Activated naive CD4-positive, alpha-beta T cell treated with anti-CD3 and anti-CD28 coated beads, Interleukin-2, amount 10 ng/mL, durations not matched to agents 7 days and 5 days (primary cell): ENCODE measurements at regions of chr18 and their contacts with region 1.

Region 1: GRCh38 chr18:74196220-74197119 is 48.1 kb downstream of the TIMM21 start:
- DNase-seq: peak; percentile 63
- H3K4me3 Mint-ChIP-seq: peak overlapping the region; percentile 48
- H3K27ac Mint-ChIP-seq: no peak overlapping the region
- H3K4me1 Mint-ChIP-seq: peaks cover 2% of the 10 kb centered on the region
- H3K27me3 Mint-ChIP-seq: peaks cover 25% of the 10 kb centered on the region

Region 2: DNA sequence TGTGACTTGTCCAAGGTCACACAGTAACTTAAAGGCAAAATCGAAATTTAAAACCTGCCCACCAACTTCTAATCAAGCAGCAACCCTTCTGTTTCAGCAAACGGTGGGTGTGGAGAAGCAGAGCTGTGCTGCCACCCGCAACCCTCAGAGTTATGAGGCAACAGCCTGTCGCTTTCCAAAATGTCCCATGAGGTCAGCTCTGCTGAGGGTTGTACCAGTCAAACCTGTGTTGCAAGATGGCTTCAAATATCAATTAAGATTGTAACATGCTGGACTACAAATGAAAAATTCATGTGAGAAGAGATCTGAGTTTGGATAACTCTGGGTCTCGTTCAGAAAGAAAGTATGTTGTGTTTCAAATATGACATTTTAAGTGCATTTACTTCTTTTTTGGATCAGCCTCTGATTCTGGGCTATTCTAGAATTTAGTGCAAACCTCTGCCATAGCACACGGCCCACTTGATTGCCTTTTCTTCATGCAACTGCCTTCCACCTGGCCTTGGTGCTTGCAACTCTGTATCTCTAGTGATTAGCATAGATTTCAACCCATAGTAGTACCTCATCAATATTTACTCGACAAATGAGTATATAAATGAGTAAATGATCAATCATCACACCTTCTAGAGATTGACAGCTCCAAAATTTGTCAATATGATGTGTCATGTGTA is 21.1 kb after region 1 on chr18:
- CTCF ChIA-PET with region 1: no interaction called
- DNase-seq: no peak
- H3K4me3 Mint-ChIP-seq: no peak overlapping the region
- H3K27ac Mint-ChIP-seq: no peak overlapping the region
- H3K4me1 Mint-ChIP-seq: no peaks in the 10 kb centered on the region
- H3K27me3 Mint-ChIP-seq: no peaks in the 10 kb centered on the region

Region 3: GRCh38 chr18:74342416-74343043 is 146.1 kb after region 1 on chr18:
- CTCF ChIA-PET with region 1: interaction called, 31 read pairs
- DNase-seq: peak; percentile 47
- H3K4me3 Mint-ChIP-seq: no peak overlapping the region
- H3K27ac Mint-ChIP-seq: no peak overlapping the region
- H3K4me1 Mint-ChIP-seq: no peaks in the 10 kb centered on the region
- H3K27me3 Mint-ChIP-seq: peaks cover 12% of the 10 kb centered on the region

Region 4: GRCh38 chr18:74551936-74552555 is 355.6 kb after region 1 on chr18:
- CTCF ChIA-PET with region 1: interaction called, 25 read pairs
- DNase-seq: peak; percentile 87
- H3K4me3 Mint-ChIP-seq: no peak overlapping the region
- H3K27ac Mint-ChIP-seq: no peak overlapping the region
- H3K4me1 Mint-ChIP-seq: no peaks in the 10 kb centered on the region
- H3K27me3 Mint-ChIP-seq: peaks cover 30% of the 10 kb centered on the region